Panc1 (cell line): ENCODE measurements at regions of chrX and their contacts with region 1.

Region 1: DNA sequence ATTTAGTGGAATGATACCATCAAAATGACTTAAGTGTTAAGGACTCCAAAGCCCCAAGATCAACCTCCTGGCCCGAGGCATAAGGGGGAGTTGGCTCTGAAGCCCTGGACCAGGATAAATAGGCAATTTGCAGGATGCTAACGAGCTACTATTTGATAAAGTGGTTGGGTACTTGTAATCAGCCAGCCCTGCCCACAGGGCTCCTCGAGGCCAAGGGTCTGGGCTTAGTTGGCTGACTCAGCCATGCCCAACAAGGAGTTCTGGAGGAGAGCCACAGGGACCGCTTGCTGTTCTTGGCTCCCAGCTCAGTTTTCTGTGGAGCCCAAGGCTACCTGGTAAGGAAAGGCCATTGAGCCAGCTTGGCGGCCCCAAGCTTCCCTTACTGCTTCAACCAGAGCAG is 7.8 kb downstream of the HMGB3 start:
- DNase-seq: no peak
- ATAC-seq: peak; percentile 76
- H3K4me3 ChIP-seq: no peak overlapping the region
- H3K27ac ChIP-seq: no peak overlapping the region
- H3K4me1 ChIP-seq: peaks cover 9% of the 10 kb centered on the region
- H3K27me3 ChIP-seq: no peaks in the 10 kb centered on the region
- CTCF ChIP-seq: no peak

Region 2: GRCh38 chrX:150790021-150790420 is 200.9 kb before region 1 on chrX:
- CTCF ChIA-PET with region 1: no interaction called
- POLR2A ChIA-PET with region 1: interaction called, 12 read pairs
- in situ Hi-C with region 1: no loop called
- intact Hi-C with region 1: no loop called
- DNase-seq: no peak
- ATAC-seq: no peak
- H3K4me3 ChIP-seq: no peak overlapping the region
- H3K27ac ChIP-seq: no peak overlapping the region
- H3K4me1 ChIP-seq: no peaks in the 10 kb centered on the region
- H3K27me3 ChIP-seq: no peaks in the 10 kb centered on the region
- CTCF ChIP-seq: no peak

Region 3: GRCh38 chrX:151082076-151082948 is 91.4 kb after region 1 on chrX:
- CTCF ChIA-PET with region 1: no interaction called
- POLR2A ChIA-PET with region 1: no interaction called
- in situ Hi-C with region 1: no loop called
- intact Hi-C with region 1: loop called (anchors 5 kb)
- DNase-seq: peak; percentile 35
- ATAC-seq: peak; percentile 96
- H3K4me3 ChIP-seq: peak overlapping the region; percentile 17 to 52
- H3K27ac ChIP-seq: 0 out of 2 replicates have a peak overlapping the region, but pooled peaks have one; percentile 18
- H3K4me1 ChIP-seq: 0 out of 2 replicates have a peak, but pooled peaks cover 4% of the 10 kb centered on the region
- H3K27me3 ChIP-seq: peaks cover 2% of the 10 kb centered on the region
- CTCF ChIP-seq: peak; percentile 98